Posterior cingulate gyrus (tissue), 11 donors: ENCODE measurements at regions of chr17 and their contacts with region 1.

Region 1: GRCh38 chr17:57861000-57861789 is 11.4 kb upstream of the MRPS23 start:
- DNase-seq: peak in 2 of 10 donors; percentile 76 to 83

Region 2: DNA sequence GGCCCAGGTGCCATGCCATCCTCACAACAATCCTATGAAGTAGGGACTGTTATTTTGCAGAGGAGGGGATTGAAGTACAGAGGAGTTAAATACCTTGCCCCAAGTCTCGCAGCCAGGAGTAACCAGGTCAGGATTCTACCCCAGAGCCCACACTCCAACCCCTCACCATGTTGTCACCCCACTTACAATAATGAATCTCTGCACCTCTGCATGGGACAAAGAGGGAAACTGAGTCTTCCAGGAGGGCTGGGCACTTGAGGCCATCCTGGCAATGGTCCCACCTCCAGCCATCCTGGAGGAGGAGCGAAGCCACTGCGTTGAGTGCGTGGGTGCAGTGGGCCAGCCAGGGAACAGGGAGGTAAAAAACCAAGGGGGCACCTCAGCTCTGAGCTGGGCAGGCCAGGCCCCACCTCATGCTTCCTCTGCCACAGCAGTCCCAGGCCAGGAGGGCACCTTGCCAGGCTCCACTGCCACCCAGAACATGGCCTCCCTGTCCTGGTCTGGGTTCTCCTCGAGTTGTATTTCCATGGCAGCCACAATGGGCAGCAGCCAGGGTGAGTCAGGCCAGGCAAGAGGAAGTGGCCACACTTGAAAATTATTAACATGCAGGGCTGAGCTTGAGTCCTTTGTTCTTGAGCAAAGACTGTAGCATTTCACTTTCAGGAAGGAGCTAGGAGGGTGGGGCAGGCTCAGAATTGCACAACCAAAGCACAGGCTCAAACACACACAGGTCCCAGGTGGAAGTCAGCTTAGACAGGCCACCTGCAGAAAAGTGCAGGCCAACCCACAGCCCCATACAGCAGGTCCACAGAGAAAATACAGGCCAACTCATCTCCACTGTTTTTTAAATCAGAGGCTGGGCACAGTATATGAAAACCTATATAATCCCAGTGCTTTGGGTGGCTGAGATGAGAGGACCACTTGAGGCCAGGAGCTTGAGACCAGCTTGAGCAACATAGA is 41.9 kb after region 1 on chr17:
- intact Hi-C with region 1: loop called (anchors 5 kb)
- DNase-seq: peak; percentile 48 to 95 (median 75)

Region 3: DNA sequence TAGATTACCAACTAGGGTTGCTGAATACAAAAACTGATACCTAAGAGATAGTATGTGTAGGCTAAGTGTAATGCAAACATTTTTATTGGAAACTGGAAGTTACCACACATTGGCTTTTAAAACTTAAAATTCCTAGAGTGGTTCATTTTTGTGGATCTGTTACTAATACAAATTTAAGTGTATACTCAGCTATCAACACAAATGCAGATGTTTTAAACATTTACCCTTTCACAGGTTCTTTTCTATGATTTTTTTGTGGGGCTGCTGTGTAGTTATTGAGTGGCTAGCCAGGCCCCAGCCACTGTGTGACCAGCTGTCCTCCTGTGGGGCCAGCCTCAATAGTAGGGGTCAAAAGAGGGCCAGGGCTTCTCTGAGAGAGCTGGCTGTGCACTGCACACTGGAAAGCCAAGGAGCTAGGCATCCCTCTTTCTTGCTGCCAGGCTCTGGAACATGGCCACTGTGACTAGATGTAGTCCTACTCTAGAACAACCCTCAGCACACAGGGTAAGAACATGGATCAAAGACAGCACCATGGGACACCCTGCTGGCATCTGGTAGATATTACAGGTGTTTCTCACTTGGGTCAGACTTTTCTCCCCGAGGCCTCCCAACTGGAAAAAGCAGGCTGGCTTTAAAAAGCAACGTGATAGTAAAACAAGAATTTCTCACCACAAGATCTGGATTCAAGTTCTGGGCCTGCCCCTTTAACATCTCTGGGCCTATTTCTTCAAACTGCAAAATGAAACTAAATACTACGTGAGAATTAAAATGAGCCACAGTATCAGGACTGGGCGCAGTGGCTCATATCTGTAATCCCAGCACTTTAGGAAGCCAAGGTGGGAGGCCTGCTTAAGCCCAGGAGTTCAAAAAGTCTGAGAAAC is 134.1 kb after region 1 on chr17:
- intact Hi-C with region 1: loop called (anchors 1 kb)
- DNase-seq: peak in 6 of 10 donors; percentile 47 to 89 (median 52)

Region 4: GRCh38 chr17:58112970-58113631 is 251.9 kb after region 1 on chr17:
- intact Hi-C with region 1: loop called (anchors 1 kb)
- DNase-seq: peak; percentile 46 to 95 (median 88)